ENCODE measurements at regions of chr6 and their contacts with region 1.

Region 1: DNA sequence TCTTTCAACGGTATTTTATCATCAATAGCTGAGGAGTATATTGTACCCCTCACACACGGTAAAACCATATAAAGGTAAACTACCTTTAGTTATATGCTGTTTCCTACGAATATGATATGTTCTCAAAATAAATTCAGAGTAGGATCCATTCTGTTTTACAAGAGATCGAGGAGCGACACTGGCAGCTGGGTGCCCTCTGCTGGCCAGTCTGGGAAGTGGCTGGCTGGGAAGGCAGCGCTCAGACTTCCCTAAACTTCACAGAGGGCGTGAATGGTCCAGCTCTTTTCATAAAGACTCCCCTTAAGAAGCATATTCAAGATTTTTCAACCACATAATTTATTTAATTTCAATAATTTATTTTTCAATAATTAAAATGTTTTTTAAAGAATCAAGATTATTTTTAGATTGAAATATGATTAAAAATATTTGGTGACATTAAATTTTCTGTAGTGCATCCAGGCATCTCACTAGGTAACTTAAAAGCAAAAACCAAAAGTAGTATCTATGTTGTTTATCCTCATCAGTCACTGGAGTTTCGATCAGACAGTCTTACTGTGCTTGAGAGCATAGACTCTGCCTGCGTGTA is 187.5 kb upstream of the PDE10A start:
- DNase-seq: peak; percentile 52 to 82
- H3K4me3 ChIP-seq: no peak overlapping the region
- H3K4me1 ChIP-seq: peaks cover 24% of the 10 kb centered on the region
- H3K27me3 ChIP-seq: no peaks in the 10 kb centered on the region

Region 2: GRCh38 chr6:165439928-165440554 is 410.5 kb before region 1 on chr6:
- in situ Hi-C with region 1: loop called (anchors 10 kb)
- DNase-seq: peak in 1 of 2 experiments; percentile 60
- H3K4me3 ChIP-seq: no peak overlapping the region
- H3K4me1 ChIP-seq: no peaks in the 10 kb centered on the region
- H3K27me3 ChIP-seq: no peaks in the 10 kb centered on the region

Region 3: DNA sequence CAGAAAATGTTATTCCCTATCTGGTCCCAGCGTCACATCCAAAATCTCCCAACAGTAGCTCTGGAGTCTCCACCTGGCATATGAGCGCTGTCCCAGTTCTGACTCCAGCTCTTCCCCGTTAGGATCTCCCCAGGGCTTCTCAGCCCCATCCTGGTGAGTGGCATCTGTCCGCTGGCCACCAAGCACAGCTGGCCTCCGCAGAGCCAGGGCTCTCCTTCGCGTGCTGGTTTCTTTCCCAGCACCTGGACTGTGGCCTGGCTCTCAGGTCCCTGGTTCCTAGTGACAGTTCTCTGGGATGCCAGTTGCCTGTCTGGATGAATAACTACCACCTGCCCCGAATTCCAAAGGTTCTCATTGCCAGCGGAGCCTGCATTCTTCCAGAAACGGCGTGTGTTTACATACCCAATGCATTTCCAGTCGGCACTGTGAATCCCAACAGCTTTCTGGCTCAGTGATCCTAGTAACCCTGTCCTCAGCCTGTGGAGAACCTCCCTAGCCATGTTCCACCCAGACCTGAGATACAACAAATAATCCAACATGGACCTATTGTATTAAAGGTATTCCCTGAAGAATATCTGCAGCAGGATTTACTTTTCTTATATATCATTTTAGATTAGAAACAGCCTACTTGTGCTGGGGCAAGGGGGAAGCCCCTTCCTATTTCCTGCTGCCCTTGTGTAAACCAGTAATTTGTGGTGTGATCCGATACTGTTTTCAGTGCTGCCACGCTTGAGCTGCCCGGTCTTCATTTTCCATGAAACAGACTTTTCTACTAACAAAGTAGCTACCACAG is 117.6 kb before region 1 on chr6:
- in situ Hi-C with region 1: loop called (anchors 5 kb)
- DNase-seq: no peak
- H3K4me3 ChIP-seq: no peak overlapping the region
- H3K4me1 ChIP-seq: peaks cover 8% of the 10 kb centered on the region
- H3K27me3 ChIP-seq: peaks cover 2% of the 10 kb centered on the region; the same call in 1 of the 2 replicates

Measured in HAP-1 (cell line).